Aorta (tissue), 5 donors: ENCODE measurements at regions of chr5 and their contacts with region 1.

Region 1: GRCh38 chr5:80487829-80488721 is at the start of gene FAM151B:
- DNase-seq: peak; percentile 92 to 94
- ATAC-seq: peak; percentile 95
- H3K4me3 ChIP-seq: peak within 1 kb of the TSS; percentile 52 to 62
- H3K27ac ChIP-seq: peak within 1 kb of the TSS in 1 of 2 donors; percentile 4
- H3K4me1 ChIP-seq: no peaks in the 10 kb centered on the region
- H3K27me3 ChIP-seq: no peaks in the 10 kb centered on the region
- total RNA-seq, gene FAM151B: 1.9 to 4.4 TPM

Region 2: GRCh38 chr5:80318212-80318611 is 169.9 kb before region 1 on chr5:
- intact Hi-C with region 1: no loop called
- DNase-seq: no peak
- ATAC-seq: no peak
- H3K4me3 ChIP-seq: no peak overlapping the region
- H3K27ac ChIP-seq: no peak overlapping the region
- H3K4me1 ChIP-seq: no peaks in the 10 kb centered on the region
- H3K27me3 ChIP-seq: no peaks in the 10 kb centered on the region

Region 3: GRCh38 chr5:80503641-80504040 is 15.6 kb after region 1 on chr5:
- intact Hi-C with region 1: no loop called
- DNase-seq: no peak
- ATAC-seq: no peak
- H3K4me3 ChIP-seq: no peak overlapping the region
- H3K27ac ChIP-seq: no peak overlapping the region
- H3K4me1 ChIP-seq: no peaks in the 10 kb centered on the region
- H3K27me3 ChIP-seq: no peaks in the 10 kb centered on the region

Region 4: DNA sequence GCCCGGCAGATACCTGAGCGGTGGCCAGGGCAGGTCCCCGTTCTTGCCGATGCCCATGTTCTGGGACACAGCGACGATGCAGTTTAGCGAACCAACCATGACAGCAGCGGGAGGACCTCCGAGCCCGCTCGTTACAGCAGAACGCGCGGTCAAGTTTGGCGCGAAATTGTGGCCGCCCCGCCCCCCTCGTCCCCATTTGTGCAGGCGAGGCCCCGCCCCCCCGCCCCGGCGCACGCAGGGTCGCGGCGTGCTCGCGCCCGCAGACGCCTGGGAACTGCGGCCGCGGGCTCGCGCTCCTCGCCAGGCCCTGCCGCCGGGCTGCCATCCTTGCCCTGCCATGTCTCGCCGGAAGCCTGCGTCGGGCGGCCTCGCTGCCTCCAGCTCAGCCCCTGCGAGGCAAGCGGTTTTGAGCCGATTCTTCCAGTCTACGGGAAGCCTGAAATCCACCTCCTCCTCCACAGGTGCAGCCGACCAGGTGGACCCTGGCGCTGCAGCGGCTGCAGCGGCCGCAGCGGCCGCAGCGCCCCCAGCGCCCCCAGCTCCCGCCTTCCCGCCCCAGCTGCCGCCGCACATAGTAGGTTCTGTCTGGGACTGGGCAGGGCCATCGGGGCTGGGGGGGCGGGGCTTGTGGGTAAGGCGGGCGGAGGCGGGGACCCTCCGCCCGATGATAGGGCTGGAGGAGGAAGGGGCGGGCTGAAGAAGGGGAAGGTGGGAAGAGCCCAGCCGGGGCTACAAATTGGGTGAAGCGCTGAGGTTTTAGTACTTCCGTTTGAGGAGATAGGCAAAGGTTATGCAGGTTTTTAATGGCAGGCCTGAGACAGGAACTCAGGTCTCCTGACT is 166.5 kb after region 1 on chr5 and contains the starts of genes DHFR and MSH3:
- intact Hi-C with region 1: loop called in 1 of 2 experiments (anchors 10 kb)
- DNase-seq: peak; percentile 91 to 95
- ATAC-seq: peak; percentile 85
- H3K4me3 ChIP-seq: peak within 1 kb of the TSS; percentile 90 to 99
- H3K27ac ChIP-seq: peak within 1 kb of the TSS; percentile 72 to 98
- H3K4me1 ChIP-seq: no peaks in the 10 kb centered on the region
- H3K27me3 ChIP-seq: no peaks in the 10 kb centered on the region
- total RNA-seq, gene DHFR: 4.5 to 10.9 TPM
- total RNA-seq, gene MSH3: 12.8 to 18.1 TPM

Region 5: GRCh38 chr5:80672140-80672736 is 184.2 kb after region 1 on chr5:
- intact Hi-C with region 1: loop called in 1 of 2 experiments (anchors 5 kb)
- DNase-seq: peak; percentile 80 to 81
- ATAC-seq: peak; percentile 83
- H3K4me3 ChIP-seq: no peak overlapping the region
- H3K27ac ChIP-seq: no peak overlapping the region
- H3K4me1 ChIP-seq: no peaks in the 10 kb centered on the region
- H3K27me3 ChIP-seq: no peaks in the 10 kb centered on the region